ENCODE measurements at regions of chr15 and their contacts with region 1.

Region 1: GRCh38 chr15:73240866-73241499 is 127.8 kb downstream of the HCN4 start:
- DNase-seq: peak; percentile 87
- ATAC-seq: no peak
- H3K4me3 Mint-ChIP-seq: no peak overlapping the region
- H3K27ac Mint-ChIP-seq: no peak overlapping the region
- H3K4me1 Mint-ChIP-seq: no peaks in the 10 kb centered on the region
- H3K27me3 Mint-ChIP-seq: no peaks in the 10 kb centered on the region
- CTCF ChIP-seq: peak; percentile 85

Region 2: GRCh38 chr15:73165844-73166243 is 75.1 kb before region 1 on chr15:
- CTCF ChIA-PET with region 1: no interaction called
- POLR2A ChIA-PET with region 1: no interaction called
- intact Hi-C with region 1: no loop called
- DNase-seq: no peak
- ATAC-seq: no peak
- H3K4me3 Mint-ChIP-seq: no peak overlapping the region
- H3K27ac Mint-ChIP-seq: no peak overlapping the region
- H3K4me1 Mint-ChIP-seq: no peaks in the 10 kb centered on the region
- H3K27me3 Mint-ChIP-seq: peaks cover 6% of the 10 kb centered on the region
- CTCF ChIP-seq: no peak

Region 3: DNA sequence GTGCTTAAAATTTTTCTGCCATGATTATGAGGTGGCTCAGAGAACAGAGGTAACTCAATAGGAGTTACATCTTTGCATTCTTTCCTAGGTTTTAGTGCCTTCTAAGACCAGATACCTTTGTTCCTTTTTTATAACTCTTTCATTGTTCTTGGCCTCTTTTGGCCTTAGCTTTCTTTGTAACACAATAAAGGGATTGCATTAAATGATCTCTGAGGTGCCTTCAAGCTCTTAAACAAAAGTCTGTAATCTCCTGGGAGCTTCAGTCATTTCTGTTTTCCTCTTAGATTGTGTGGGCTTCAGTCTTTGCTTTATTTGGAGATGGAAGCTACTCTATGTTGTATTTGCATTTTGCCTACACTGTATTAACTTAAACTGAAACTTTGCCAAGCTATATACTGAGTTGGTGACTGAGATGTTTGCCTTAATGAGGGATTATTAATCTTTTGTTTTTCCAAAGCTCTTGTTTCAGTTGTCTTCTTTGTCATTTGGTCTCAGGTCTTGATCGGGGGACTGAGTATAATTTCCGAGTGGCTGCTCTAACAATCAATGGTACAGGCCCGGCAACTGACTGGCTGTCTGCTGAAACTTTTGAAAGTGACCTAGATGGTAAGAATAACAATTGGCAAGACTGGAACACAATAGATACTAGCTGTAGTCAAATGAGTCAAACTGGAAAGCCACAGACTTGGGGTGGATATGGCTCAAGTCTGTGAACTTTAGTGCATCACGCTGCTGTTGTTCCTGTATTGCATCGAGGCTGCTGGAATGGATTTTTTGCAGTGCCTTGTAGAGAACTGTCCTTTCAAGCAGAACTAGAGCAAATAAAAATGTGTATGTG is 17.5 kb after region 1 on chr15:
- CTCF ChIA-PET with region 1: interaction called, 17 read pairs
- POLR2A ChIA-PET with region 1: no interaction called
- intact Hi-C with region 1: no loop called
- DNase-seq: peak; percentile 18
- ATAC-seq: peak; percentile 39
- H3K4me3 Mint-ChIP-seq: no peak overlapping the region
- H3K27ac Mint-ChIP-seq: no peak overlapping the region
- H3K4me1 Mint-ChIP-seq: peaks cover 3% of the 10 kb centered on the region
- H3K27me3 Mint-ChIP-seq: peaks cover 1% of the 10 kb centered on the region
- CTCF ChIP-seq: no peak

Measured in activated CD8-positive, alpha-beta T cell treated with anti-CD3 and anti-CD28 coated beads for 36 hours (primary cell).